ENCODE measurements at regions of chr20 and their contacts with region 1.

Region 1: DNA sequence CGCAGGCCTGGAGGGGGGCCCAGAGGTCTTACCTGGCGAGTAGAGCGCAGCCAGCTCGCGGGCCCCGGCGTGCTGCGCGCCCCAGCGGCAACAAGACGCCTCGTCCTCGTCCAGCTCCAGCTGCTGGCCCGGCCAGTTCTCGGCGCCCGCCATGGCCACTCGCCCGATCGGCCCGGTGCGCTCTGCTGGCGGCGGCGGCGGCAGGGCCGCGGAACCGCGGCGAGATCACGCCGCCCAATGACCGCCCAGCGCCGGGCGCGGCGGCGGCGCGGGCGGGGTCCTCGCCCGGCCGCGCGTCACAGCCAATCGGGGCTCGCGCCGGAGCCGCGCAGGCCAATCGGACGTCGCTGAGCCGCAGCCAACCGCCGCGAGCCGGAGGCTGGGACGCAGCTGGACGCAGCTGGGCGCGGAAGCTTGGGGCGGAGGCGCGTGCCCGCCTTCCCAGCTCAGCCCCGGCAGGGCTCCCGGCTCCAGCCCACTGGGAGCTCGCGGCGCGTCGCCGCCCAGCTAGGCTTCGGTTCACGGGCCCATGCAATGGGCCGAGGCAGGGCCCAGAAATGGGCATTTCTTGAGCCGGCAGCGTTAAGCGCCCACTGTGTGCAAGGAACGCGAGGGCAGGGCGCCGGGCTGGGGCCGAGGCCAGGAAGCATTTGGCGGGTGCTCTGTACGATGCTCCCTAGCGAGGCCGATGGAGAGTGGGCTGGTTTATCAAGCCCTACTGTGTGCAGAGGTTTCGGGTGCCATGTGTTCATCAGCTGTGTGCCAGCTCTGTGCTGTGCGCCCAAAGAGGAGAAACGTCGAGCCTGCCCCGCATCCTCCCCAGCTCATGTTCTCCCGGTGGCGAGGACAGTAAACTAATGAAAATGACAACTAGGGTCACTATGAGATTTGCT is at the start of gene PEDS1:
- DNase-seq: peak; percentile 91
- ATAC-seq: peak; percentile 98
- H3K4me3 Mint-ChIP-seq: peak within 1 kb of the TSS; percentile 75
- H3K27ac Mint-ChIP-seq: peak within 1 kb of the TSS; percentile 88
- H3K4me1 Mint-ChIP-seq: peaks cover 36% of the 10 kb centered on the region
- H3K27me3 Mint-ChIP-seq: no peaks in the 10 kb centered on the region
- total RNA-seq, gene PEDS1: 13.2 to 16.8 TPM

Region 2: DNA sequence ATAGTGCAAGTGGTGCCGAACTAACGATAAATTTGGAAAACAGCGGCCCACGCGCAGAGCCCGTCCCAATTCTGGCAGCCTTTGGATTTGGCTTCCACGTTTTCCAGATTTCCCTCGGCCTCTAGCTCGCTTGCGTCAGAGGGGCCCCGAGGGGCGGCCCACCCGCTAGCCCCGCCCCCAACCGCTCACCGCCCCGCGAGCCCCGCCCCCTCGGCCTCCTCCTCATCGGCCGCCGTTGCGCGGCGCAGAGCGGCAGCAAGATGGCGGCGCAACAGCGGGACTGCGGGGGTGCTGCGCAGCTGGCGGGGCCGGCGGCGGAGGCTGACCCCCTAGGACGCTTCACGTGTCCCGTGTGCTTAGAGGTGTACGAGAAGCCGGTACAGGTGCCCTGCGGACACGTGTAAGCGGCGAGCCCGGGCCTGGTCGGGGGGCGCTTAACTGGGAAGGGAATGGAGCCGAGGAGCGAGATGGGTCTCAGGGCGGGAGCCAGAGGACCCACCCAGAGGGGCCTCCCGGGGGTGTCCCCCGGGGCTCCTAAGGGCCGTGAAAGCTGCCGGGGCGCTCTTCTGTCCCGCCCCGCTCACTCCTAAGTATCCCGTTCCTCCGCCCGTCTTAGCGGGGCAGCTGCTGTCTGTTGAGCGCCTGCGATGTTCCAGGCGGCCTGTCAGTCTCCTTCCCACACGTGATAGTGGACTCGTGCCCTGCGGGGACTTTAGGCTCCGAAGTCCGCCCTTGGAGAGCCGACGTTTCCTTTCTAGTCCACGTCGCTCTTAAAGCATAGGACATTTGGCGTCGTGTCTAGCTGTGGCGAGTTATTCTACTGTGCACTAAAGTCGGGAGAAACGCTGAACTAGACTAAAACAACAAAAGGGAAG is 217.3 kb before region 1 on chr20 and contains the start of gene RNF114:
- CTCF ChIA-PET with region 1: no interaction called
- POLR2A ChIA-PET with region 1: no interaction called
- intact Hi-C with region 1: loop called in 1 of 2 experiments (anchors 1 kb)
- DNase-seq: peak; percentile 96
- ATAC-seq: peak; percentile 93
- H3K4me3 Mint-ChIP-seq: peak within 1 kb of the TSS; percentile 85
- H3K27ac Mint-ChIP-seq: peak within 1 kb of the TSS; percentile 85
- H3K4me1 Mint-ChIP-seq: peaks cover 41% of the 10 kb centered on the region
- H3K27me3 Mint-ChIP-seq: no peaks in the 10 kb centered on the region
- total RNA-seq, gene RNF114: 47.5 to 66.6 TPM

Region 3: GRCh38 chr20:50110141-50110925 is 43.4 kb before region 1 on chr20:
- CTCF ChIA-PET with region 1: interaction called, 20 read pairs
- POLR2A ChIA-PET with region 1: interaction called, 7 read pairs
- intact Hi-C with region 1: loop called (anchors 1 to 2 kb)
- DNase-seq: peak; percentile 69
- ATAC-seq: peak; percentile 49
- H3K4me3 Mint-ChIP-seq: peak overlapping the region; percentile 93
- H3K27ac Mint-ChIP-seq: peak overlapping the region; percentile 92
- H3K4me1 Mint-ChIP-seq: peaks cover 82% of the 10 kb centered on the region
- H3K27me3 Mint-ChIP-seq: no peaks in the 10 kb centered on the region